Aorta (tissue), 5 donors: ENCODE measurements at regions of chr7 and their contacts with region 1.

Region 1: GRCh38 chr7:95871078-95871782 is 98.9 kb downstream of the DYNC1I1 start:
- DNase-seq: no peak
- ATAC-seq: no peak
- H3K4me3 ChIP-seq: no peak overlapping the region
- H3K27ac ChIP-seq: no peak overlapping the region
- H3K4me1 ChIP-seq: peaks cover 0 to 6% of the 10 kb centered on the region in 2 donors
- H3K27me3 ChIP-seq: no peaks in the 10 kb centered on the region

Region 2: DNA sequence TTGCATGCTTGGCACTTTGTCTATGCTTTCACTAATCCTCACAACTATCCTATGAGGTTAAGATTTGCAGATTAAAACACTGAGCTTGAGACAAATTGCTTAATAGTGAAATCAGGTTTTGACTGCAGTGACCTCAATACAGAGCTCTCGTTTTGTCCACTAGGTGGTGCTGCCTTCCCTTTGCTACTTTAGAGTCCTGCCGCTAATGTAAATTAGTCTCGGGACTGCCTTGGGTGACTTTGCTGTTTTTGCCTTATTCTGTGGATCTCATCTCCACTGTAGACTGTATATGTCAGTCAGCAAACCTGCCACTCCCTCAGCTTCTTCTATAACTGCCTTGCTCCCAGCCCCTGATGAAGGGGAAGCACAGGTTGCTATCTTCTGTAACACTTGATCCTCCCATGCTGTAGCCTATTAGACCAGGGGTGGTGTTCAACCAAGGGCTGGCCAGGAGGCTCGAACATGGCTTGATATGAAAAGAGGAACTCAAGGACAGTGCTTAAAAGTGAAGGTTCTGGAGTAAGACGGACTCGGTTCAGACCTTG is 359.4 kb before region 1 on chr7:
- intact Hi-C with region 1: loop called in 1 of 2 experiments (anchors 10 kb)
- DNase-seq: peak in 1 of 2 donors; percentile 63
- ATAC-seq: peak; percentile 90
- H3K4me3 ChIP-seq: peak overlapping the region in 1 of 2 donors; percentile 56
- H3K27ac ChIP-seq: no peak overlapping the region
- H3K4me1 ChIP-seq: peaks cover 0 to 2% of the 10 kb centered on the region in 2 donors
- H3K27me3 ChIP-seq: no peaks in the 10 kb centered on the region

Region 3: DNA sequence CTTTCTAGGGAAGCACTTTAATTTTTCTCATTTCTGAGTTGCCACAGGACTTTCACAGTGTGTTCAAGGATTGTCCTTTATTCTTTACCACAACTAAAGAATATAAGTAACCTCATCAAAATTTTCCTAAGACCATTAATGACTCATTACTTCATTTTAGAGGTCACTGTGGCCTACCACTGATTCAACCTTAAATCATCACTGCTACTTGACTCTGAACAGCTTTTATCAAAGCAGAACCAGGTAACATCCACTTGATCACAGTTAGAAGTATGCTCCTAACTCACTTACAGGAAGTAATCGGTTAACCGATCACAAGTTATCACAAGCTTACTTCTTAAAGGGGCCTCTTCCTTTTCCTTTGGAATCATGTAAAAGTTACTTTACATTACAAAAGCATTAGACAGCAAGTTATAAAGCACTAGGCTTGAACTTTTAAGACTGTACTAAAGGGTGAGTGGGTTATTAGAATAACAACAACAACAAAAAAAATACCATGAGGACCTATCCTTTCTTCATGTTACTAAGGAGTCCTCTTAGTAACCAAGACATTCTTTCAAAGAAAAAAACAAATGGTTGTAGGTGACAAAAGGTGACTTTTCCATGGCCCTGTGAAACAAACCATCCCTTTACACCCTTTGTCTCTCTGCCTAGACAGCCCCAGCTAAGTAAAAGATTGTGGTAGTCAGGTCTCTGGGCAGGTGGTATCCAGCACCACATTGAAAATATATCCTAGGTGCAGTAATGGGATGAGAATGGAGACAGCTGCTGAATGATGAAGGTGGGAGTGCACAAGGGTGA is 234.9 kb before region 1 on chr7:
- intact Hi-C with region 1: no loop called
- DNase-seq: no peak
- ATAC-seq: no peak
- H3K4me3 ChIP-seq: no peak overlapping the region
- H3K27ac ChIP-seq: no peak overlapping the region
- H3K4me1 ChIP-seq: no peaks in the 10 kb centered on the region
- H3K27me3 ChIP-seq: no peaks in the 10 kb centered on the region

Region 4: DNA sequence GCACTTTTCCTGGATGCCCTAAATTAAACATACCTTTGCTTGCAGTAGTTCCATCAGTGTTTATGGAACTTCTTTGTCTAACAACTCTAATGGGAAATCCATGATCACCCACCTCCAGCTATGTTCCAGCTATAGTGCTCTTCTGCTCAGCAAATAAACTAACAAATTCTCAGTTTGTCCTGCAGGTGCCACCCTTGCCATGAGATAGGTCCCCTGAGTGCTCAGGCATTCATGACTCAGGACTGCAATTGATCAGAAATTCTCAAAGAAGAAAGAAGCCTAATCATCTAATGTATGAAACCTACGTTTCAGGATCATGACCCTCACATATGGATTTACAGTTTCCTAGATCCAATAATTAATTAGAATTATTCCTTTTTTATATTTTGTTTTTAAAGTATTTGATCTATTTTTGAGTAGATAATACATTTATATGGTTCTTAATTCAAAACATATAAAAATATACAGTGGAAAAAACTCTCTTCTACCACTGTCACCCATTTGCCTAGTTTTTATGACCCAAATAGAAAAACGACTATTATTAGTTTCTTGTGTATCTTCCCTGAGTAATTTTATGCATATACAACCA is 147.5 kb before region 1 on chr7:
- intact Hi-C with region 1: loop called (anchors 1 to 2 kb)
- DNase-seq: no peak
- ATAC-seq: peak; percentile 49
- H3K4me3 ChIP-seq: no peak overlapping the region
- H3K27ac ChIP-seq: no peak overlapping the region
- H3K4me1 ChIP-seq: no peaks in the 10 kb centered on the region
- H3K27me3 ChIP-seq: no peaks in the 10 kb centered on the region

Region 5: GRCh38 chr7:95772298-95772770 is 98.9 kb before region 1 on chr7 and contains the start of gene DYNC1I1:
- intact Hi-C with region 1: loop called in 1 of 2 experiments (anchors 10 kb)
- DNase-seq: peak; percentile 85 to 91
- ATAC-seq: peak; percentile 78
- H3K4me3 ChIP-seq: peak within 1 kb of the TSS; percentile 85 to 87
- H3K27ac ChIP-seq: peak within 1 kb of the TSS in 1 of 2 donors; percentile 38
- H3K4me1 ChIP-seq: peaks cover 0 to 4% of the 10 kb centered on the region in 2 donors
- H3K27me3 ChIP-seq: no peaks in the 10 kb centered on the region
- total RNA-seq, gene DYNC1I1: 11.0 to 13.3 TPM